ENCODE measurements at regions of chr22 and their contacts with region 1.

Region 1: GRCh38 chr22:17824457-17824856 is 50.2 kb upstream of the BID start:
- DNase-seq: no peak
- H3K4me3 ChIP-seq: no peak overlapping the region
- H3K27ac ChIP-seq: no peak overlapping the region
- H3K4me1 ChIP-seq: peaks cover 2% of the 10 kb centered on the region
- H3K27me3 ChIP-seq: no peaks in the 10 kb centered on the region
- CTCF ChIP-seq: no peak

Region 2: DNA sequence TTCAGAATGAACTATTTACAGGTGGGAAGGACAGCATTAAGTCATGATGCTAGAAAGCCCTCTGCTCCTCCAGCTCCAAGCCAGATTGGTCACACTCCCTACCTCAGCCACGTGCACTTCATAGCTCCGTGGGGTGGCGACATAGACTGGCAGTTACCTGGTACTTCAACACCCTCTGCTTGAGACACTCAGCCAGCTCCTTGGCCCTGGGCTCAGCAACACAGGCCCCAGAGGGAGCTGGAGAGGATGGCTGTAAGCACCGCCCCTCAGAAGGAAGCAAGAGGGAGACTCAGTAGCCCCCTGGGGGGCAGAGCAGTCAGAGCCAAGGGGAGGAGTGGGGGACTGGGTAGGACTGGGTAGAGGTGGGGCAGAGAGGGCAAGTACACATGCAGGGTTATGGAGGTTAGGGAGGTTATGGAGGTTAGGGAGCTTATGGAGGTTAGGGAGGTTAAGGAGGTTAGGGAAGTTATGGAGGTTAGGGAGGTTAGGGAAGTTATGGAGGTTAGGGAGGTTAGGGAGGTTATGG is 51.9 kb after region 1 on chr22:
- CTCF ChIA-PET with region 1: no interaction called
- dilution Hi-C with region 1: loop called (anchors 5 kb)
- in situ Hi-C with region 1: no loop called
- intact Hi-C with region 1: no loop called
- DNase-seq: peak; percentile 7
- H3K4me3 ChIP-seq: no peak overlapping the region
- H3K27ac ChIP-seq: no peak overlapping the region
- H3K4me1 ChIP-seq: peaks cover 16% of the 10 kb centered on the region
- H3K27me3 ChIP-seq: no peaks in the 10 kb centered on the region
- CTCF ChIP-seq: no peak

Region 3: GRCh38 chr22:18152519-18152918 is 328.1 kb after region 1 on chr22:
- CTCF ChIA-PET with region 1: interaction called, 23 read pairs
- dilution Hi-C with region 1: no loop called
- in situ Hi-C with region 1: no loop called
- intact Hi-C with region 1: no loop called
- DNase-seq: no peak
- H3K4me3 ChIP-seq: no peak overlapping the region
- H3K27ac ChIP-seq: no peak overlapping the region
- H3K4me1 ChIP-seq: peaks cover 4% of the 10 kb centered on the region
- H3K27me3 ChIP-seq: no peaks in the 10 kb centered on the region
- CTCF ChIP-seq: no peak

Measured in mammary epithelial cell (primary cell).